AG04450 (cell line): ENCODE measurements at regions of chr11 and their contacts with region 1.

Region 1: DNA sequence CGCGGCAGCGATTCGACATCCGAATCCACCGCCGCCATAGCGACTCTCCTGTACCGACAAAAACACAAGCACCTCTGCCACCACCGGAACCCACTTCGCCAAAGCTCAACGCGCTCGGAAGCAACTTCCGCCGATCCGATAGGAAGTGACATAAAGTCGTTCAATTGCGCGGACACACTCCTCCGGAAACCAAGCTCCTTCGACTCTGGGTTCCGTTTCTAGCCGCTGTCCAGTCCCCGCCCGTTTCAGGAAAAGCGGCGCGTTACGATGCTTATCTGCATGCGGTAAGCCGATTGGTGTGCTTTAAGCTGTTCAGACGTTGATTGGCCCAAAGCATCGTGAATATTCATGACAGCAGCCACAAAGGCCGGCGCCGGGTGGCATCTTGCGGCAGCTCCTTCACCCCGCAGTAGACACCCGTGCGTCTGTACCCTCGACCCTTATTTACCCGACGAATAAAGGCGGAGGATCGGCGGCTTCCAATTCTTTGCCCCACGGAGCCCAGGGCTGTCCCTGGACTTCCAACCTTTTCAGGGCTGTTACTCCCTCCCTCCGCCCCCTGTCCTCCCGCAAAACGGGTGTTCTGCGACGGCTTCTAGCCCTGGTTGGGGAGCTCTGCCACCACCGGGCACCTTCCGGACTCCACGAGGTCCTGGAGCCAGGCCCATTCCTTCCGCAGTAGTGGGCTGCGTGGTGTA is at the start of gene TUT1:
- DNase-seq: peak; percentile 97
- H3K4me3 ChIP-seq: peak within 1 kb of the TSS; percentile 68
- H3K27ac ChIP-seq: peak within 1 kb of the TSS; percentile 87
- H3K27me3 ChIP-seq: no peaks in the 10 kb centered on the region
- CTCF ChIP-seq: no peak
- polyA plus RNA-seq, gene TUT1: 7.8 and 9.0 TPM in 2 replicates

Region 2: DNA sequence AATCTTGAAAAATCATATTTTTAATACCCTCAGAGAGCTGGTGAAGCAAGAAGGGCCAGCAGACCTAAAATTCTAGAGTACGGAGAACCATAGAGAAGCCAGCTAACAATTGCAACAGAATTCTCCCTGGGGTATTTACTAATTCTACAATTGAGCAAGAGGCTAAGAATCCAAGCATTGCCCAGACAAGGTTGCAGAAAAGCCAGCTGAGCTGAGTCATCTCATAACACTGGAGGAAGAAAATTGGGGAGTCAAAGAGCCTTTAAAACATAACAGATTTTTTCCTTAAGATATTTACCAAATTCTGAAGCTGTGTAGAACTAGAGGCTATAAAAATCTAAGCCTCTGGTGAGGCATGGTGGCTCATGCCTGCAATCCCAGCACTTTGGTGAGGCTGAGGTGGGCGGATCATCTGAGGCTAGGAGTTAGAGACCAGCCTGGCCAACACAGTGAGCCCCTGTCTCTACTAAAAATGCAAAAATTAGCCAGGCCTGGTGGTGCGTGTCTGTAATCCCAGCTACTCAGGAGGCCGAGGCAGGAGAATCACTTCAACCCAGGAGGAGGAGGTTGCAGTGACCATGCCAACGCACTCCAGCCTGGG is 1212.8 kb before region 1 on chr11:
- CTCF ChIA-PET with region 1: no interaction called
- POLR2A ChIA-PET with region 1: interaction called, 19 read pairs
- DNase-seq: peak; percentile 88
- H3K4me3 ChIP-seq: no peak overlapping the region
- H3K27ac ChIP-seq: peak overlapping the region; percentile 87
- H3K27me3 ChIP-seq: no peaks in the 10 kb centered on the region
- CTCF ChIP-seq: no peak

Region 3: DNA sequence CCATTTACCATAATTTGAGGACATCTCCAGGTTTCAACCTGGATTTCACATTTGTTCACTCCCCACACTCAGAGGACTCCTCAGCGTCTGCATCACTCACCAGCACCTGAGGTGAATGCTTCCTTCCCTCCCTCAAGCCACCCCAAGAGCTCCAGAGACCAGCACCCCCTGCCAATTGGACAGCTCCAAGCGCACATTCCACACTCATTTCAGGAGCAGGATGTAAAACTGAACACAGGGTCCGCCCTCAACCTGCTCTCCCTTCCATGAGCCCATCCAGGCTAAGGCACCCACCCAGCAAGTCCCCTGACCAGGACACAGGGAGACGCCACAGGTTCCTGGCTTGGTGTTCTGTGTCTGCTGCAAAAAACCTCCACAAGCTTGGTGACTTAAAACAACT is 397.6 kb before region 1 on chr11:
- CTCF ChIA-PET with region 1: no interaction called
- POLR2A ChIA-PET with region 1: no interaction called
- DNase-seq: no peak
- H3K4me3 ChIP-seq: no peak overlapping the region
- H3K27ac ChIP-seq: no peak overlapping the region
- H3K27me3 ChIP-seq: peaks cover 6% of the 10 kb centered on the region
- CTCF ChIP-seq: no peak

Region 4: GRCh38 chr11:62556108-62556871 is 35.3 kb before region 1 on chr11:
- CTCF ChIA-PET with region 1: interaction called, 5 read pairs
- POLR2A ChIA-PET with region 1: interaction called, 10 read pairs
- DNase-seq: peak; percentile 86
- H3K4me3 ChIP-seq: peak overlapping the region; percentile 27
- H3K27ac ChIP-seq: peak overlapping the region; percentile 87
- H3K27me3 ChIP-seq: no peaks in the 10 kb centered on the region
- CTCF ChIP-seq: no peak

Region 5: GRCh38 chr11:62573592-62574362 is 17.8 kb before region 1 on chr11 and contains the start of gene EEF1G:
- CTCF ChIA-PET with region 1: interaction called, 3 read pairs
- POLR2A ChIA-PET with region 1: interaction called, 67 read pairs
- DNase-seq: peak; percentile 100
- H3K4me3 ChIP-seq: peak within 1 kb of the TSS; percentile 92
- H3K27ac ChIP-seq: peak within 1 kb of the TSS; percentile 98
- H3K27me3 ChIP-seq: no peaks in the 10 kb centered on the region
- CTCF ChIP-seq: no peak
- polyA plus RNA-seq, gene EEF1G: 2,186 and 2,474 TPM in 2 replicates

Region 6: GRCh38 chr11:62612366-62613290 is 21.0 kb after region 1 on chr11 and contains the starts of genes EML3 and ROM1:
- CTCF ChIA-PET with region 1: interaction called, 14 read pairs
- POLR2A ChIA-PET with region 1: interaction called, 5 read pairs
- DNase-seq: peak; percentile 37
- H3K4me3 ChIP-seq: peak within 1 kb of the TSS; percentile 79
- H3K27ac ChIP-seq: peak within 1 kb of the TSS; percentile 65
- H3K27me3 ChIP-seq: no peaks in the 10 kb centered on the region
- CTCF ChIP-seq: peak; percentile 71
- polyA plus RNA-seq, gene EML3: 17.1 and 18.6 TPM in 2 replicates
- polyA plus RNA-seq, gene ROM1: 1.4 and 2.0 TPM in 2 replicates

Region 7: DNA sequence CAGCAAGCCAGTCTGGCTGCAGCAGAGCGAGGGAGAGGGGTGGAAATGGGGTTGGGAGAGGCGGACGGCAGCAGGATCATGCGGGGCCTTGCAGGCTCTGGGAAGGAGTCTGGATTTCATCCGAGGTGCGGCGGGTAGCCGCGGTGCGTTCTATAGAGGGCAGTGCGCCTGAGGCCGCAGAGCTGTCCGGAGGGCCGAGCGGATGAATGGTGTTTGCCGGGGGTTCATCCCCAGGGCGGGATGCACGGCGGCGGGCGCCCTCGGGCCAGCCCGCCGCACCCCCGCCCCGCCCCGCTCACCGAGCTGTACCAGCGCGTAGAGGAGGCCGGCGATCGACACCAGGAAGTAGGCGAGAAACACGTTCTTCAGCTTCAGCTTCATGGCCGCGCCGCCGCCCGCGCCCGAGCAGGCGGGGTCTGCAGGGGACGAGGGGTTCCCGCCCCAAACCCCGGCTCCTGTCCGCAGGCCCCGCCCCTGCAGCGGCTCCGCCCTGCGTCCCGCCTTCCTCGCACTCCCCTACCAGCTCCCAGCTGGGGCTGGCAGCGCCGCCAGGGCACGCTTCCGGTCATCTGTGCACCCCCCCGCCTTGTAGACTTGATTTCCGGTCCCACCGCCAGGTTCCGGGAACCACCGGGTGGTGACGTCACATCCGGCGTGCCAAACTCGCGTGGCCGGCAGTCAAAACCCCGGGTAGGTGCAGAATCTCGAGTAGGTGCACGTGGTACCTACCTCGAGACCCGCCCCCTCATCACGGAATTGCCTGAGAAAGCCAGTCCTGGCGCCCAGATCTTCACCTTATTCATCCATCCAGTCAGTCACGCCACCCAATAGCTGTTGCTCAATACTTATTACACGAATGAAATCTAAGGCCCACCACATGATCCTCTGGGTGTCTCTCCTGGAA is 30.2 kb after region 1 on chr11 and contains the start of gene B3GAT3:
- CTCF ChIA-PET with region 1: interaction called, 6 read pairs
- POLR2A ChIA-PET with region 1: interaction called, 15 read pairs
- DNase-seq: peak; percentile 96
- H3K4me3 ChIP-seq: peak within 1 kb of the TSS; percentile 86
- H3K27ac ChIP-seq: peak within 1 kb of the TSS; percentile 97
- H3K27me3 ChIP-seq: no peaks in the 10 kb centered on the region
- CTCF ChIP-seq: peak; percentile 13; the same call in 1 of the 2 replicates
- polyA plus RNA-seq, gene B3GAT3: 14.5 and 20.2 TPM in 2 replicates